ENCODE measurements at regions of chr1 and their contacts with region 1.

Region 1: DNA sequence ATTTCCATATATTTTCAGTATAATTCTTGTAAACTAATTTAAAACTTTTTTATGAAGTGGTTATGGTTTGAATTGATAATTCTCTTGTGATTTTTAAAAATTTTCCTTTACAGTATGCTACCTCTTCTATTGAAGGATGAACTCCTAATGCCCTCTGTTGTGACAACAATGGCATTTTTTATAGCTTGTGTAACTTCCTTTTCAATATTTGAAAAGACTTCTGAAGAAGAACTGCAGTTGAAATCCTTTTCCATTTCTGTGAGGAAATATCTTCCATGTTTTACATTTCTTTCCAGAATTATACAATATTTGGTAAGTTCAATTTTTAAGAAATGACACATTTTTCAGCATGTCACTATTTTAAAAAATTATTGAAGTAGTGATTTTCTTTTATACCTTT is 61.4 kb downstream of the ALG6 start:
- DNase-seq: peak; percentile 38
- ATAC-seq: peak; percentile 40; the same call in 1 of the 2 replicates
- H3K4me3 ChIP-seq: no peak overlapping the region
- H3K27ac ChIP-seq: no peak overlapping the region
- H3K4me1 ChIP-seq: peaks cover 6% of the 10 kb centered on the region; the same call in 1 of the 2 replicates
- H3K27me3 ChIP-seq: no peaks in the 10 kb centered on the region
- CTCF ChIP-seq: no peak

Region 2: GRCh38 chr1:63403386-63403785 is 25.4 kb before region 1 on chr1:
- CTCF ChIA-PET with region 1: no interaction called
- POLR2A ChIA-PET with region 1: interaction called, 10 read pairs
- intact Hi-C with region 1: no loop called
- DNase-seq: peak; percentile 72
- ATAC-seq: peak; percentile 95
- H3K4me3 ChIP-seq: no peak overlapping the region
- H3K27ac ChIP-seq: no peak overlapping the region
- H3K4me1 ChIP-seq: peaks cover 27% of the 10 kb centered on the region
- H3K27me3 ChIP-seq: no peaks in the 10 kb centered on the region
- CTCF ChIP-seq: no peak